Mammary epithelial cell (primary cell): ENCODE measurements at regions of chr7 and their contacts with region 1.

Region 1: DNA sequence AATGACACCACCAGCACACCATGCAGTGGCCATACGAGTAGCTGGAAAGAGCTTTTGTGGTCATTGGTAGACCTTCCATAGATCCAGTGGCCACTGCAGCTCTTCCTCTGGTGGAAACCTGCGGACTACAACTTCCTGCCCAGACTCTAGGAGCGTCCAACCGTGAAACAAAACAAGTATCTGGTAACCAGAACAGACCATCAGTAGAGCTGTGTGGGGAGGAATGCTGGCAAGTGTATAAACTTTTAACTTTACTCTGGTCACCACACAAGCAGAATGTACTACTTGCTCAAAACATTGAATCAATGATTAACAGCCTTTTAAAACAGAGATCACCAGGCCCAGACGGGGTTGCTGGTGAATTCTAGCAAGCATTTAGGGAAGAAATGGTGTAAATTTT is 154.7 kb upstream of the DGKB start:
- DNase-seq: no peak
- H3K4me3 ChIP-seq: no peak overlapping the region
- H3K27ac ChIP-seq: no peak overlapping the region
- H3K4me1 ChIP-seq: no peaks in the 10 kb centered on the region
- H3K27me3 ChIP-seq: no peaks in the 10 kb centered on the region
- CTCF ChIP-seq: no peak

Region 2: DNA sequence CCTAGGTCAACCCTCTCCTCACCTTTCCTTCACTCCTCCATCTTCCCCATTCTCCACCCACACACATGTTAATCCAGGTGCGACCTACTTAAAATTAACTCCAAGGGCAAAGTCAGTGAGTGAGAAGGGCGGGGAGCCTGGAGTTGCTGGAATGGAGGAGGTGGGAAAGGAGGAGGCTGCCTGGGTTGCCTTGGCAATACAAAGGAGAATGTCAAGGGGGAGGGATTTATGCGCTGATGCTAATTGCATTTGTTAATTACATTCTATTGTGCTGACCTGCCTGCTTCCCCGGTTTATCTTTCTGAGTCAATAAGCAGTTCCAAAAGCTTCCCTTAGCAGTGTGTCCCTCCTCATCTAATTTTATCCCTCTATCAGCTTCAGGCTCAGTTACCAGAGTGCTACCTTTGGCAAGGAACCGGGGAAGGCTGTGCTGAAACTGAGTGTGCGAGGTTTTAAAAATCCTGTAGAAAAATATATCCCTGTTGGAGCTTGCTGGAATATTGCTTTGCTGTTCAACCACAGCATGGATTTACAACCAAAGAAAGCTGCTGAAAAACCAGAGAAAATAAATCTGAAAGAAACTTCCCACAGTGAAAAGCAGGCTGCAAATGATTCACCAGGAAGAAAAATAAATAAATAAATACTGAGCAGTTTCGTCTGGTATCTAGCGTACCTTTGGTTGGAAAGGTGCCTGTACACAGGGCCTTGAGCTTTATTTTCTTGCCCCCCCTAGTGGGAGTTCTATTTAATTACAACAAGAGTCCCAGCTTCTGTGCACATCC is 41.5 kb before region 1 on chr7:
- CTCF ChIA-PET with region 1: no interaction called
- dilution Hi-C with region 1: no loop called
- in situ Hi-C with region 1: no loop called
- intact Hi-C with region 1: no loop called
- DNase-seq: peak; percentile 80
- H3K4me3 ChIP-seq: peak overlapping the region in 2 of 3 experiments; percentile 32 to 42
- H3K27ac ChIP-seq: peak overlapping the region; percentile 63
- H3K4me1 ChIP-seq: peaks cover 20% of the 10 kb centered on the region
- H3K27me3 ChIP-seq: no peaks in the 10 kb centered on the region
- CTCF ChIP-seq: peak; percentile 52 to 72

Region 3: DNA sequence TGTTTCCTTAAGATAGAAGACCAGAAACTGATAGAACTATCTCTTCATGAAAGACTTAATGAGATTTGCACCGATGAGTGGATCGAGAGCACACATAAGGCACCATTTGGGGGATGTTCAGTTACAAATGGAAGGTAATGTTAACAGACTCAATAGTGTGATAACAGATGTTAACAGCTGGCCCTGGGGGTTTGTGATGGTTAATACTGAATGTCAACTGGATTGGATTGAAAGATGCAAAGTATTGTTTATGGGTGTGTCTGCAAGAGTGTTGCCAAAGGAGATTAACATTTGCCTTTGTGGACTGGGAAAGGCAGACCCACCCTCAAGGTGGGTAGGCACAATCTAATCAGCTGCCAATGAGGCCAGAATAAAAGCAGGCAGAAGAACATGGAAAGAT is 24.2 kb before region 1 on chr7:
- CTCF ChIA-PET with region 1: no interaction called
- dilution Hi-C with region 1: no loop called
- in situ Hi-C with region 1: no loop called
- intact Hi-C with region 1: no loop called
- DNase-seq: no peak
- H3K4me3 ChIP-seq: no peak overlapping the region
- H3K27ac ChIP-seq: no peak overlapping the region
- H3K4me1 ChIP-seq: no peaks in the 10 kb centered on the region
- H3K27me3 ChIP-seq: no peaks in the 10 kb centered on the region
- CTCF ChIP-seq: no peak

Region 4: DNA sequence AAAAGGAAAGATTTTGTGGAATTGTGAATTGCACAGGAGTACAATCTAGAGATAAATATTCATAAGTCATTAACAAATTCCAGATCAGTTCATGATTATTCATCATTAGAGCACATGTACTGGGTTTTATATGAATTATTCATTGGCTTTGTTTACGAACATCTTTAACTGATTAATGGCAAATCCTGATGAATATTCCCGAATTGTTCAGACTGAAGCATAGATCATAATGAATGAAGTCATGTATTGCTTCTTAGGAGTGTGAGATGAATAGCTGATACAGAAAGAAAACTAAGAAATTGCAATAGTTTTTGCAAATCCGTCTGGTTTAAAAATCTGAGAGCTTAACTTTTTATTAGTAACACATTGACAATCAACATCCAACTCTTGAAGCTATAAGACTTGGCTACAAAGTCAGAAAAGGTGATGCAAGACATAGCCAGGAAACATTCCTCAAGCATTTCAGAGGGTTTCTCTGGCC is 28.9 kb after region 1 on chr7:
- CTCF ChIA-PET with region 1: no interaction called
- dilution Hi-C with region 1: no loop called
- in situ Hi-C with region 1: no loop called
- intact Hi-C with region 1: no loop called
- DNase-seq: no peak
- H3K4me3 ChIP-seq: no peak overlapping the region
- H3K27ac ChIP-seq: no peak overlapping the region
- H3K4me1 ChIP-seq: no peaks in the 10 kb centered on the region
- H3K27me3 ChIP-seq: peaks cover 3% of the 10 kb centered on the region
- CTCF ChIP-seq: no peak

Region 5: DNA sequence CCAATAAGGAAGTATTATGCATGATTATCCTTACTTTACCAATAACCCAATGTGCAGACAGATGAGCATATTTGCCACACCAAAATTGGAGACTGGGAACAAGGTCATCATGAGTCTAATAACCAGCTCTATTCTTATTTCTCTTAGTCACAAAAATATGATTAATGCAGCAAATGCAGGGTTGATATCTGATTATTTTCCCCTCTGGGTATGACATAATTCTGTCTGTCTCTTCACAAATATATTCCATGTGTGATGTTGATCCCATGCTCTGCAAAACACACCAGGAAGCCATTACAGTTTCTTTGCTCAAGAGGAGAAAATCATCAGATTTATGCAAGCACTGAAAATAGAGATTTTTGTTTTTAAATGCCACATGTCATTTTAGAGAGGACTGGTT is 41.8 kb after region 1 on chr7:
- CTCF ChIA-PET with region 1: no interaction called
- dilution Hi-C with region 1: loop called (anchors 5 kb)
- in situ Hi-C with region 1: no loop called
- intact Hi-C with region 1: no loop called
- DNase-seq: no peak
- H3K4me3 ChIP-seq: no peak overlapping the region
- H3K27ac ChIP-seq: no peak overlapping the region
- H3K4me1 ChIP-seq: no peaks in the 10 kb centered on the region
- H3K27me3 ChIP-seq: no peaks in the 10 kb centered on the region
- CTCF ChIP-seq: no peak

Region 6: DNA sequence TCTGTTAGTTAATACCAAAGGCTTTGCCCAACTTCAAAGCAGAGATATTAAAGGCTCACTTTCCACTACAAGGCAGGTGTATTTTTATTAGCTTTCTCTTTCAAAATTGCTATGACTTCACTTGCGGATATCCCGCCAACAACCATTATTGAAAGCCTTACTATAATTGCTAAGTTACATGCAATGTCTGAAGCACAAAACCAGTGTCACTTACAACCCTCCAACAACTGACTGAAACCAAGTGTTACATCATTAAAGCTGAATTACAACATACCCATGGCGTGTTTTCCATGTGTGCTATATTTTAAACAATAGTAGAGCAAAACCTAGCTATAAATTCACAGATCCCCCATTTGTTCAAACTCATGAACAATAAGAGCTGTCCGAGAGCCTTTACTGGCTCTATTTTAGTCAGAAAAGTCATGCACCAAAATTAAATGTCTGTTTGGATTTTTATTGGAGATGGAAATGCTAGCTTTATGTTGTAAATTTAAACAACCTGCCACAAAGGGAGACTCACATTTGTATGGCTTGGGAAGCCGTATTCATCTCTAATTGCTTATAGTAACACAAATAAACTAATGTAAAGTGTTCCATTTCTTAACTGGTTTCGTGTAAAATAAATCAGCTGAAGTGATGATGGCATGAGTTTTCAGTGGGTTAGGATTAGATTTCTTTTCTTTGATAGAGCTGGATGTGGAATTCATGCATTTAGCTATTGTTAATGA is 277.4 kb after region 1 on chr7:
- CTCF ChIA-PET with region 1: no interaction called
- dilution Hi-C with region 1: no loop called
- in situ Hi-C with region 1: no loop called
- intact Hi-C with region 1: no loop called
- DNase-seq: no peak
- H3K4me3 ChIP-seq: no peak overlapping the region
- H3K27ac ChIP-seq: no peak overlapping the region
- H3K4me1 ChIP-seq: no peaks in the 10 kb centered on the region
- H3K27me3 ChIP-seq: no peaks in the 10 kb centered on the region
- CTCF ChIP-seq: no peak